ENCODE measurements at regions of chrX and their contacts with region 1.

Region 1: GRCh38 chrX:115665122-115665521 is 104.1 kb downstream of the PLS3 start:
- DNase-seq: no peak
- ATAC-seq: no peak
- H3K4me3 ChIP-seq: no peak overlapping the region
- H3K27ac ChIP-seq: no peak overlapping the region
- H3K4me1 ChIP-seq: no peaks in the 10 kb centered on the region
- H3K27me3 ChIP-seq: no peaks in the 10 kb centered on the region
- CTCF ChIP-seq: no peak
- EP300 ChIP-seq: no peak
- POLR2A ChIP-seq: no peak
- RAD21 ChIP-seq: no peak

Region 2: DNA sequence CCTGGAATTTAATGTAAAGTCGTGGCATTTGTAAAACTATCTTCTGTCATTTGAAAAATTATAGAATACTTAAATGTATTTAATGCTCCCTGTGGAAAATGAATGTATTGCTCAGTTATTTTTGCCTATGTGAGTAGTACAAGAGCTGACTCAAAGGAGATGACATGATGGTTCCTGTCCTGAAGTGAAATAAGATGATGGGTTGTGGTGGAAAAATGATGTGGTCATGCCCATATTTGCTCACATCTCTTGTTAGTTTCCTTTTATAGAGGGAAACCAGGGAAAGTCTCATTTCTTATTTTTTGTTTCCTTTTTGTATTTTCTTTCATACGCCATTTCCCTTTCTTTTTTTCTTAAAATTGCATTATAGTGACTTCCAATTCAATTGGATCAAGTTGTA is 80.4 kb before region 1 on chrX:
- CTCF ChIA-PET with region 1: no interaction called
- POLR2A ChIA-PET with region 1: no interaction called
- RAD21 ChIA-PET with region 1: no interaction called
- SMC1A ChIA-PET with region 1: no interaction called
- in situ Hi-C with region 1: no loop called
- intact Hi-C with region 1: no loop called
- DNase-seq: no peak
- ATAC-seq: peak; percentile 79
- H3K4me3 ChIP-seq: no peak overlapping the region
- H3K27ac ChIP-seq: no peak overlapping the region
- H3K4me1 ChIP-seq: no peaks in the 10 kb centered on the region
- H3K27me3 ChIP-seq: no peaks in the 10 kb centered on the region
- CTCF ChIP-seq: no peak
- EP300 ChIP-seq: no peak
- POLR2A ChIP-seq: no peak
- RAD21 ChIP-seq: no peak

Region 3: DNA sequence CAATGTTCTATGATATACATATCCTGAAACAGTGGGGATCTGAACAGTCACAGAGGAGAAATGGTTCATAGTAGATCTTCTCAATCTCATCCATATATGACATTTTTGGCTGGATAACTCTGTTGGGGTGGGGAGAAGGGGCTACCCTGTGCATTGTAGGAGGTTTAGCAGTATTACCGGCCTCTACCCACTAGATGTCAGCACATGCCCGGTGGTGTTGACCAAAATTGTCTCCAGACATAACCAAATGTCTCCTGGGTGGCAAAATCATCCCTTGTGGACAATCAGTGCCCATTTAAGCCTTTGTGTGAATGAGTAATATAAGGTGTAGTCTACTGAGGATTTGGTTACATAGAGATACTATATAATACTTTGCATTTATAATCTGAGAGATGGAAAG is 14.2 kb before region 1 on chrX:
- CTCF ChIA-PET with region 1: interaction called, 13 read pairs
- POLR2A ChIA-PET with region 1: no interaction called
- RAD21 ChIA-PET with region 1: no interaction called
- SMC1A ChIA-PET with region 1: interaction called, 4 read pairs
- in situ Hi-C with region 1: no loop called
- intact Hi-C with region 1: no loop called
- DNase-seq: peak; percentile 17
- ATAC-seq: peak; percentile 84
- H3K4me3 ChIP-seq: no peak overlapping the region
- H3K27ac ChIP-seq: no peak overlapping the region
- H3K4me1 ChIP-seq: no peaks in the 10 kb centered on the region
- H3K27me3 ChIP-seq: no peaks in the 10 kb centered on the region
- CTCF ChIP-seq: peak; percentile 61 to 72 (median 68)
- EP300 ChIP-seq: no peak
- POLR2A ChIP-seq: no peak
- RAD21 ChIP-seq: peak; percentile 78

Measured in GM12878 (cell line).